Heart right ventricle (tissue), 16 donors: ENCODE measurements at regions of chr13 and their contacts with region 1.

Region 1: DNA sequence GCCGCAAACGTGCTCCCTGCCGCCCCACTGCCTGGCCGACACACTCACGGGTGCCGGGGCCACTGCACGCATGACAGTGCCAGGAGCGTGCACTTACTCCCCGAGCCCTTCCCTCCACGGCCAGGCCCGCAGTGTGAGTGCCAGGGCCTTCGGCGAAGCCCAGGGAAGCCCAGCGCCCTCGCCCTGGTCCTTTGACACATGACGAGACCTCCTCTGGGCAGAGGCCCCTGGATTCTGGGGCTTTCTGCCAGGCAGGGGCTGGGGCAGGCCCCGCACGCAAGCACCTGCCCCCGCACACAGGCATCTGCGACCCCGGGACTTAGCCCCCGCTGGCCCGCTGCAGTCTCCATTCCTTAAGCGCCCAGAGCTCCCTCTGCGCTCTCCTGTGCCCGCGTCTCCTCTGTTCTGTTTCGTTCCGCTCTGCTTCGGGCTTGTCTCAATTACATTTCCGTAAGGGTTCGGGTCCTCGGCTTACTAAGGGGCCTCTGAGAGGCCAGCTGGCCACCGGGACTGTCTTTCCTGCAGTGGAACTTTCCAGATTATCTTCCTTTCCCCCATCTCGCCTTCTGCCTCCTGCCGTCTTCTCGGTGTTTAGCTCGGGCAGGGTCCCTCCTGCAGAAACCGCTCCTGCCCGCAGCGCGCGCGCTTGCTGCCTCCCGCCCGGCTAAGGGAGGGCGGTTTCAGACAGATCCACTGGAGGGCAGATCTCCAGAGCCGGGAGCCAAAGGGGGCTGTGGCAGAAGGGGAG is 98.8 kb downstream of the ING1 start:
- DNase-seq: no peak
- ATAC-seq: peak; percentile 17 to 82 (median 55)
- H3K4me3 ChIP-seq: peak overlapping the region; percentile 0 to 51 (median 40)
- H3K27ac ChIP-seq: no peak overlapping the region
- H3K4me1 ChIP-seq: peaks cover 0 to 16% (median 9%) of the 10 kb centered on the region in 9 donors
- H3K27me3 ChIP-seq: peaks cover 0 to 62% (median 54%) of the 10 kb centered on the region in 7 donors
- CTCF ChIP-seq: peak in 4 of 9 donors; percentile 9 to 36 (median 26)

Region 2: DNA sequence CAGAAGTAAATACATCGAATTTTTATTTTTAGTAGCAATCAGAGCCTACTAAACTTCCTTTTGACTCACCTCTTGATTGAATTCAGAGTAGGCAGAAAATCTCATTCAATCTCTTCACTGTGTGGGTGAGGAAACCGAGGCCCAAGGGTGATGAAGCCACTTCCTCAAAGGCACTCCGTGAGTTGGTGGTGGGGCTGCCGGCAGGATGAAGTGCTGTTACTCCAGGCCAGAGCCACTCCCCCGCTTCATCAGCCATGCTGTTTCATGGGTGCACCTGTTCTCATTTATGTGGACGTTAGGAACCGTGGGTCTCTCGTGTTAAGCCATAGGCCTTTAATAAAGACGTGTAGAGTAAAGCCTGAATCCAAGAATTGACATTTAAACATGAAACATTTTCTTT is 85.6 kb before region 1 on chr13:
- intact Hi-C with region 1: loop called in 4 of 10 experiments (anchors 5 to 10 kb)
- DNase-seq: no peak
- ATAC-seq: no peak
- H3K4me3 ChIP-seq: no peak overlapping the region
- H3K27ac ChIP-seq: no peak overlapping the region
- H3K4me1 ChIP-seq: peaks cover 0 to 14% (median 0%) of the 10 kb centered on the region in 9 donors
- H3K27me3 ChIP-seq: no peaks in the 10 kb centered on the region
- CTCF ChIP-seq: no peak

Region 3: DNA sequence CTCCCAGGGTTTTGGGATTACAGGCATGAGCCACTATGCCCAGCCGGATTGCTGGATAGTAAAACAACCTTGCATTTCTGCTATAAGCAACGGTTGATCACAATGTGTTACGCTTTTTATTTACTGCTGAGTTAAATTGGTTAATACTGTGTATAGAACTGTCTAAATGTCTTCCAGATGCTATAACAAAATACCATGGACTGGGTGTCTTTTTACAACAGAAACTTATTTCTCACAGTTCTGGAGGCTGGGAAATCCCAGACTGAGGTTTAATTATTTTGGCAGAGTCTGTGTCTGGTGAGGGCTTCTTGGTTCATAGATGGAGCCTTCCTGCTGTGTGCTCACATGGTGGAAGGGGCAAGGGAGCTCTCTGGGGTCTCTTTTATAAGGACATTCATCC is 33.3 kb before region 1 on chr13:
- intact Hi-C with region 1: no loop called
- DNase-seq: no peak
- ATAC-seq: no peak
- H3K4me3 ChIP-seq: no peak overlapping the region
- H3K27ac ChIP-seq: no peak overlapping the region
- H3K4me1 ChIP-seq: no peaks in the 10 kb centered on the region
- H3K27me3 ChIP-seq: peaks cover 0 to 9% (median 0%) of the 10 kb centered on the region in 7 donors
- CTCF ChIP-seq: no peak

Region 4: GRCh38 chr13:110853235-110853721 is 41.0 kb after region 1 on chr13:
- intact Hi-C with region 1: no loop called
- DNase-seq: no peak
- ATAC-seq: peak in 7 of 8 donors; percentile 19 to 74 (median 46)
- H3K4me3 ChIP-seq: no peak overlapping the region
- H3K27ac ChIP-seq: peak overlapping the region in 1 of 10 donors; percentile 15
- H3K4me1 ChIP-seq: no peaks in the 10 kb centered on the region
- H3K27me3 ChIP-seq: peaks cover 0 to 10% (median 6%) of the 10 kb centered on the region in 7 donors
- CTCF ChIP-seq: no peak

Region 5: GRCh38 chr13:111281751-111282311 is 469.5 kb after region 1 on chr13:
- intact Hi-C with region 1: no loop called
- DNase-seq: peak in 1 of 2 donors; percentile 47
- ATAC-seq: peak in 7 of 8 donors; percentile 13 to 74 (median 63)
- H3K4me3 ChIP-seq: no peak overlapping the region
- H3K27ac ChIP-seq: peak overlapping the region; percentile 63 to 94 (median 77)
- H3K4me1 ChIP-seq: peaks cover 15 to 65% (median 51%) of the 10 kb centered on the region in 9 donors
- H3K27me3 ChIP-seq: no peaks in the 10 kb centered on the region
- CTCF ChIP-seq: peak in 2 of 9 donors; percentile 21 to 31